Right lobe of liver (tissue), 6 donors: ENCODE measurements at regions of chr3 and their contacts with region 1.

Region 1: GRCh38 chr3:48273594-48274211 is 32.8 kb downstream of the ZNF589 start:
- DNase-seq: peak in 2 of 3 donors; percentile 31 to 60
- ATAC-seq: peak; percentile 82 to 88 (median 86)
- H3K4me3 ChIP-seq: no peak overlapping the region
- H3K27ac ChIP-seq: no peak overlapping the region
- H3K4me1 ChIP-seq: no peaks in the 10 kb centered on the region
- H3K27me3 ChIP-seq: no peaks in the 10 kb centered on the region
- CTCF ChIP-seq: peak; percentile 72 to 80 (median 76)
- POLR2A ChIP-seq: no peak

Region 2: DNA sequence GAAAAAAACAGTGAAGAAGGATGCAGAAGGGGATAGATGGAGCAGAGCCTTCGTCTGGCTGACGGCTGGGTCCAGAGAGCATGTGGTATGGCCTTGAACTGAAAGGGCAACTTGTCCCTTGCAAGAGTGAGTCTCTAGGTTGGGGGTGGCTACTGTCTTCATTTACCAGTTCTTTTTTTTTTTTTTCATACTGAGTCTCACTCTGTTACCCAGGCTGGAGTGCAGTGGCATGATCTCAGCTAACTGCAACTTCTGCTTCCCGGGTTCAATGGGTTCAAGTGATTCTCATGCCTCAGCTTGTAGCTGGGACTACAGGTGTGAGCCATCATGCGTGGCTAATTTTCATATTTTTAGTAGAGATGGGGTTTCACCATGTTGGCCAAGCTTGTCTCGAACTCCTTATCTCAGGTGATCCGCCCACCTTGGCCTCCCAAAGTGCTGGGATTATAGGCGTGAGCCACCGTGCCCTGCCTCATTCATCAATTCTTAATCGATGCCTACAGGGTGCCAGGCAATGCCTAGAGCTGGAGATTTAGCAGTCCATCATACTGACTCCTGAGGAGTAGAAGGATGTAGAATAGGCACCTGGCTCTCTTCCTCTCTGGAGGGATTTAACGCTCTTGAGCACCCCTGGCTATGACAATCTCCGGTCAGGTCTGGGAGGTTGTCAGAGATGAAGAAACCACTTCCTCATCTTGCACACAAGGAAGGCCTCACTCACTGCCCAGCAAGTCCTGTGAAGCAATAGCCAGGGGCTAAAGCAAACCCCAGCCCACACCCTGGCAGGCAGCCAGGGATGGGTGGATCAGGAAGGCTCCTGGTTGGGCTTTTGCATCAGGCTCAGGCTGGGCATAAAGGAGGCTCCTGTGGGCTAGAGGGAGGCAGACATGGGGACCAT is 50.8 kb before region 1 on chr3 and contains the start of gene CAMP:
- intact Hi-C with region 1: no loop called
- DNase-seq: peak; percentile 68 to 77 (median 72)
- ATAC-seq: peak; percentile 43 to 70 (median 62)
- H3K4me3 ChIP-seq: no peak within 1 kb of the TSS
- H3K27ac ChIP-seq: no peak within 1 kb of the TSS
- H3K4me1 ChIP-seq: no peaks in the 10 kb centered on the region
- H3K27me3 ChIP-seq: no peaks in the 10 kb centered on the region
- CTCF ChIP-seq: no peak
- POLR2A ChIP-seq: no peak
- total RNA-seq, gene CAMP: 0.46 to 0.50 TPM in 2 of 6 experiments, not detected in the others

Region 3: GRCh38 chr3:48439820-48440589 is 166.3 kb after region 1 on chr3 and contains the starts of genes CCDC51 and TMA7:
- intact Hi-C with region 1: loop called (anchors 5 kb)
- DNase-seq: peak; percentile 99
- ATAC-seq: peak; percentile 95 to 97 (median 96)
- H3K4me3 ChIP-seq: peak within 1 kb of the TSS; percentile 72 to 86 (median 75)
- H3K27ac ChIP-seq: peak within 1 kb of the TSS; percentile 78 to 83 (median 78)
- H3K4me1 ChIP-seq: peaks cover 0 to 18% (median 4%) of the 10 kb centered on the region in 4 donors
- H3K27me3 ChIP-seq: no peaks in the 10 kb centered on the region
- CTCF ChIP-seq: no peak
- POLR2A ChIP-seq: peak; percentile 90
- total RNA-seq, gene CCDC51: 5.9 to 16.0 (median 8.1) TPM
- total RNA-seq, gene TMA7: 64.8 to 182 (median 80.1) TPM

Region 4: GRCh38 chr3:48514436-48515227 is 240.9 kb after region 1 on chr3:
- intact Hi-C with region 1: no loop called
- DNase-seq: no peak
- ATAC-seq: no peak
- H3K4me3 ChIP-seq: no peak overlapping the region
- H3K27ac ChIP-seq: no peak overlapping the region
- H3K4me1 ChIP-seq: no peaks in the 10 kb centered on the region
- H3K27me3 ChIP-seq: no peaks in the 10 kb centered on the region
- CTCF ChIP-seq: no peak
- POLR2A ChIP-seq: no peak